Sigmoid colon (tissue), 7 donors: ENCODE measurements at regions of chr17 and their contacts with region 1.

Region 1: GRCh38 chr17:56754523-56755208 is 79.1 kb downstream of the C17orf67 start:
- DNase-seq: no peak
- H3K4me3 ChIP-seq: no peak overlapping the region
- H3K27ac ChIP-seq: no peak overlapping the region
- H3K4me1 ChIP-seq: no peaks in the 10 kb centered on the region
- H3K27me3 ChIP-seq: no peaks in the 10 kb centered on the region
- CTCF ChIP-seq: no peak
- EP300 ChIP-seq: no peak
- POLR2A ChIP-seq: no peak

Region 2: DNA sequence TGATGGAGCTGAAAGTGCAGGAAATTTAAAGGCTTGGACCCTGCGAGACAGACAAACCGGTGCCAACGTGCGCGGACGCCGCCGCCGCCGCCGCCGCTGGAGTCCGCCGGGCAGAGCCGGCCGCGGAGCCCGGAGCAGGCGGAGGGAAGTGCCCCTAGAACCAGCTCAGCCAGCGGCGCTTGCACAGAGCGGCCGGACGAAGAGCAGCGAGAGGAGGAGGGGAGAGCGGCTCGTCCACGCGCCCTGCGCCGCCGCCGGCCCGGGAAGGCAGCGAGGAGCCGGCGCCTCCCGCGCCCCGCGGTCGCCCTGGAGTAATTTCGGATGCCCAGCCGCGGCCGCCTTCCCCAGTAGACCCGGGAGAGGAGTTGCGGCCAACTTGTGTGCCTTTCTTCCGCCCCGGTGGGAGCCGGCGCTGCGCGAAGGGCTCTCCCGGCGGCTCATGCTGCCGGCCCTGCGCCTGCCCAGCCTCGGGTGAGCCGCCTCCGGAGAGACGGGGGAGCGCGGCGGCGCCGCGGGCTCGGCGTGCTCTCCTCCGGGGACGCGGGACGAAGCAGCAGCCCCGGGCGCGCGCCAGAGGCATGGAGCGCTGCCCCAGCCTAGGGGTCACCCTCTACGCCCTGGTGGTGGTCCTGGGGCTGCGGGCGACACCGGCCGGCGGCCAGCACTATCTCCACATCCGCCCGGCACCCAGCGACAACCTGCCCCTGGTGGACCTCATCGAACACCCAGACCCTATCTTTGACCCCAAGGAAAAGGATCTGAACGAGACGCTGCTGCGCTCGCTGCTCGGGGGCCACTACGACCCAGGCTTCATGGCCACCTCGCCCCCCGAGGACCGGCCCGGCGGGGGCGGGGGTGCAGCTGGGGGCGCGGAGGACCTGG is 160.8 kb before region 1 on chr17 and contains the start of gene NOG:
- intact Hi-C with region 1: no loop called
- DNase-seq: peak; percentile 72
- H3K4me3 ChIP-seq: peak within 1 kb of the TSS; percentile 19 to 58 (median 50)
- H3K27ac ChIP-seq: peak within 1 kb of the TSS in 3 of 4 donors; percentile 57 to 73 (median 67)
- H3K4me1 ChIP-seq: peaks cover 0 to 57% (median 49%) of the 10 kb centered on the region in 4 donors
- H3K27me3 ChIP-seq: peaks cover 32 to 85% (median 59%) of the 10 kb centered on the region in 3 donors
- CTCF ChIP-seq: no peak
- EP300 ChIP-seq: no peak
- POLR2A ChIP-seq: no peak
- total RNA-seq, gene NOG: 0.16 to 0.36 TPM in 2 of 4 donors, not detected in the others

Region 3: DNA sequence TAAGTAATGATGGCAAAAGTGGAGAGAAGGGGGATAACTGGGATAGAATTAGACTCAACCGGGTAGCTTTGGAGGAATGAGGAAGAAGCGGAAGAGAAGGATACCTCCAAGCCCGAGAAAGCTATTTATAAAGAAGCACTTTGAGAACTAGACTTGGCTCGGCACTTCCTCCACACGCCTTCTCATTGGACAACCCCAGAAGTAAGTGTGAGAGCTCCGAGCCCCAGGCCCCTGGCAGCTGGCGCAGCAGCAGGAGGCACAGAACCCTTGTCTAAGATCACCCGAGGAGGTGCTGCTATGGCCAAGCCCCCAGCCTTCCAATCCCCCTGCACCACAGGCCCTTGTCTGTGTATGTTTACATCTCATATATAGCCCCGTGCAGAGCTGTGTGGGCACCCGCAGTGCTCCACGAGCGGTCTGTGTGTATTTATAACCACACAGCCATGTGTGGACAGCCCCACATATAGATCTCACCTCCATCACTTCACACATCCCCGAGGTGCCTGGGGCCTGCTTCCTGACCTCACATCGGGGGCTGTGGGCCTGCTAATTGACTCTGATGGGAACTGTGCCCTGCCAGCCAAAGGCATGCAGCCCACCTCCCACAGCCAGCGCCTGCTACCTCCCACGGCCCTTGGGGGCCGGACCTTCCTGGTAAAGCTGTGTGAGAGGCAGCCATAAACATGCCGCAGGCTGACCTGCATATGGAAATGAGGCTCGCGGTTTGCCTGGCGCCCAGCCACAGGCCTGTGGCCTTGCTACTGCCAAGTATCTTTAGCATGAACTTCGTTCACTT is 17.1 kb before region 1 on chr17:
- intact Hi-C with region 1: no loop called
- DNase-seq: no peak
- H3K4me3 ChIP-seq: no peak overlapping the region
- H3K27ac ChIP-seq: no peak overlapping the region
- H3K4me1 ChIP-seq: no peaks in the 10 kb centered on the region
- H3K27me3 ChIP-seq: no peaks in the 10 kb centered on the region
- CTCF ChIP-seq: no peak
- EP300 ChIP-seq: no peak
- POLR2A ChIP-seq: no peak

Region 4: GRCh38 chr17:56779898-56780733 is 25.4 kb after region 1 on chr17:
- intact Hi-C with region 1: loop called (anchors 2 kb)
- DNase-seq: peak; percentile 81
- H3K4me3 ChIP-seq: peak overlapping the region in 3 of 4 donors; percentile 9 to 36 (median 31)
- H3K27ac ChIP-seq: no peak overlapping the region
- H3K4me1 ChIP-seq: peaks cover 0 to 12% (median 4%) of the 10 kb centered on the region in 4 donors
- H3K27me3 ChIP-seq: peaks cover 0 to 43% (median 4%) of the 10 kb centered on the region in 3 donors
- CTCF ChIP-seq: peak; percentile 64 to 97 (median 78)
- EP300 ChIP-seq: no peak
- POLR2A ChIP-seq: no peak